Activated CD4-positive, alpha-beta T cell treated with anti-CD3 and anti-CD28 coated beads, Interleukin-2, amount 10 ng/mL, durations not matched to agents 24 days and 14 days (primary cell): ENCODE measurements at regions of chrX and their contacts with region 1.

Region 1: GRCh38 chrX:124406294-124407014 is 60.1 kb downstream of the SH2D1A start:
- DNase-seq: peak; percentile 86
- H3K4me3 Mint-ChIP-seq: no peak overlapping the region
- H3K27ac Mint-ChIP-seq: no peak overlapping the region
- H3K4me1 Mint-ChIP-seq: peaks cover 3% of the 10 kb centered on the region
- H3K27me3 Mint-ChIP-seq: no peaks in the 10 kb centered on the region

Region 2: GRCh38 chrX:124719060-124719459 is 312.6 kb after region 1 on chrX:
- intact Hi-C with region 1: loop called (anchors 10 kb)
- DNase-seq: no peak
- H3K4me3 Mint-ChIP-seq: no peak overlapping the region
- H3K27ac Mint-ChIP-seq: no peak overlapping the region
- H3K4me1 Mint-ChIP-seq: peaks cover 7% of the 10 kb centered on the region
- H3K27me3 Mint-ChIP-seq: no peaks in the 10 kb centered on the region

Region 3: DNA sequence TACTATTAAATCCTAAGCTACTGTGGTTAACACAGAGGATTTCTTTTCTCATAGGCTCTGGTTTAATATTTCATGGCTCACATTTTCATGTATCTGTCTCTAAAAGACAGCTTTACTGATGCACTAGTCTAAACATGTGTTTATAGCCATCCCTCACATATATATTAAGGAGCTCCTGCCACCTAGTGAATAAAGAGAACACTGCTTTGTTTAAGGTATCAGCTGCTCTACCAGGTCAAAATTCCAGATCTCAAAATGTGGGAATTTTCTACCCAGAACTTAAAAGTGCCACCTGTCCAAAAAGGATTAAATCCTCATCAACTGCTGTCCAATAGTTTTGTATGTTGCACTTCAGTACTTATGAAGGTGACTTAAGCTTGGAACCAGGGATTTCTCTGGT is 724.7 kb after region 1 on chrX:
- intact Hi-C with region 1: loop called (anchors 2 kb)
- DNase-seq: no peak
- H3K4me3 Mint-ChIP-seq: no peak overlapping the region
- H3K27ac Mint-ChIP-seq: no peak overlapping the region
- H3K4me1 Mint-ChIP-seq: no peaks in the 10 kb centered on the region
- H3K27me3 Mint-ChIP-seq: no peaks in the 10 kb centered on the region